ENCODE measurements at regions of chr18 and their contacts with region 1.

Region 1: GRCh38 chr18:24421831-24422230 is 4.6 kb upstream of the IMPACT start:
- DNase-seq: no peak
- H3K4me3 ChIP-seq: no peak overlapping the region
- CTCF ChIP-seq: no peak

Region 2: DNA sequence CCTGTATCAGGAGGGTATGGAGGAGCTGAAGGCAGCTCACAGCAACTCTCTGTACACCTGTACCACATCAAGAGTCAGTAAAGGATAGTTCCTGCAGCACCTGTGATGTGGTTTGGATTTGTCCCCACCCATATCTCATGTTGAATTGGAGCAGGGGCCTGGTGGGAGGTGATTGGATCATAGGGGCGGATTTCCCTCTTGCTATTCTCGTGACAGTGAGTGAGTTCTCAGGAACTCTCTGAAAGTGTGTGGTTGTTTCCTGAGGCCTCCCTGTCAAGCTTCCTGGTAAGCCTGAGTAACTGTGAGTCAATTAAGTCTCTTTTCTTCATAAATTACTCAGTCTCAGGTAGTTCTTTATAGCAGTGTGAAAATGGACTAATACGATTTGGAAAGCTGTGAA is 53.1 kb before region 1 on chr18:
- in situ Hi-C with region 1: no loop called
- DNase-seq: no peak
- H3K4me3 ChIP-seq: no peak overlapping the region
- CTCF ChIP-seq: no peak

Region 3: DNA sequence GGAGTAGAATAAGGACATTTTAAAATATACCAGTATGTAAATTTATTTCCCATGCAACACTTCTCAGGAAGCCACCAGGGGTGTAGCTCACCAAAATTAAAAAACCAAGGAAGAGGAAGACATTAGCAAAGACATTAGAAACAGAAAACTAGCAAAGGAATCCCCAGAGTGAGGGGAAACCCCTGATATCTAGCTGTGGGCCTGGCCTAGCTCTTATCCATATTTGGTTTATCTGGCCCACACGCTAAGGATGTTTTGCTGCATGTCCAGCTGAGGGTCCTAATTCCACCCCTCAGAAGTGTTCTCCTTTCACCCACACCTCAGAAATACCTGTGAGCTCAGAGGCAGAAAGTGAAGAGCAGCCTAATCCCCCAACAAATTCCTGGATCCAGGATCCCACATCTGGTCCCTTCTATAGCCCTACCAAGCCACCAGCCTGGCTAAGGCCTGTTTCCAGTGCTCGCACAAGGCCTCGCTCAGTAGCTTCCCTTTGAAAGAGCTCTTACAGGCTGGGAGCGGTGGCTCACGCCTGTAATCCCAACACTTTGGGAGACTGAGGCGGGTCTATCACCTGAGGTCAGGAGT is 41.6 kb before region 1 on chr18:
- in situ Hi-C with region 1: loop called (anchors 5 kb)
- DNase-seq: no peak
- H3K4me3 ChIP-seq: no peak overlapping the region
- CTCF ChIP-seq: no peak

Region 4: DNA sequence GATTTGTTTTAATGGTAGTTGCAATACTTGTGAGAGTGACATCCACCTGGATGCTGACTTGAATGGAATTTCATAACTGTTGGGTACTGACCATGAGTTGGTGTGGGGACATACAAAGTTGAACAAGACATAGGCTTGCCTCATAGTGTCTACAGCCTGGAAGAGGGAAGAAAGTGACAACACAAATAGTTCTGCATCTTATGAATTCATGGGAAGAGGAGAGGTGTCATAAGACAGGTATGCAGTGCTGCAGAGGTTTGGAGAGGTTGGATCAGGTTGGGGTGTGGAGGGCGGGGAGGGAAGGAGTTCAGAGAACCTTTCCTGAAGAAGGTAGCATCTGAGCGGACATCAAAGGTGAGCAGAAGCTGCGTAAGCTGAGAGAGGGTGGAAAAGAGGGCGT is 82.6 kb after region 1 on chr18:
- in situ Hi-C with region 1: no loop called
- DNase-seq: no peak
- H3K4me3 ChIP-seq: no peak overlapping the region
- CTCF ChIP-seq: no peak

Measured in astrocyte of the cerebellum (primary cell).